Caco-2 (cell line): ENCODE measurements at regions of chr13 and their contacts with region 1.

Region 1: DNA sequence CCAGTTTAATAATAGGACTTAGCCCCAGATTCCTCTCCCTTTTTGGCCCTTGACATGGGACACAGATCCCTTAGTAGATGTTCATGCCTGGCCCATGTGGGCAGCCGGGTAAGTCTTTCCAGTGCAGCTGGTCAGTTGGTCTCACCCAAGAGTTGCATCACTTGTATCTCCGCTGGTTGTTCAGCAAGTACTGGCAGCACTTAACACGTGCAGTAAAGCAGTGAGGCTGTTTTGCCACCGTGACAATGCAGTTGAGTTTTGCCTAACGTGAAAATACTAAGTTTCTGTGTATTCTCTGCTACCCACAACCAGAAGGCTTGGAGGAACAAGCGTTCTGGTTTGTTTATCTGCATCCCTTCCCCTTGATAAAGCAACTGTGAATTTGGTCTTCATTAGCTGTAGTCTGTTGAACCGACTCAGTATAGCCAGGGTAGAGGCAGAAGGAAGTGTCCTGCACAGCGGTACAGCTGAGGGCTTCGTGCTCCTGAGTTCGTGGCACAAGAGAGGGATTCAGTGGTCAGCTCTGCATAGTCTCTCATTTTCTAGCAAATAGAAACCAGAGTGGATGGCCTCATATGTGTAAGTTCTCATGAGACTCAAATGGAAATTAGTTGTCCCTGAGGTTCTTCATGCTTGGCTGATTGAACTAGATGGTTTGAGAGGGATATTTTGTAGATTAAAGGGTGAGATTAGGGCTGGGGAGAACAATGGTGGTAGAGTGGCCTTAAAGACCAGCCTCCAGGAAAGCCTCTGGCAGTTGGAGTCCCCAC is 50.3 kb downstream of the ARHGEF7 start:
- DNase-seq: no peak
- H3K4me3 ChIP-seq: no peak overlapping the region
- H3K4me3 Mint-ChIP-seq: no peak overlapping the region
- H3K27ac Mint-ChIP-seq: no peak overlapping the region
- H3K4me1 ChIP-seq: no peaks in the 10 kb centered on the region
- H3K4me1 Mint-ChIP-seq: peaks cover 13% of the 10 kb centered on the region
- H3K27me3 ChIP-seq: no peaks in the 10 kb centered on the region
- H3K27me3 Mint-ChIP-seq: no peaks in the 10 kb centered on the region
- CTCF ChIP-seq: no peak

Region 2: GRCh38 chr13:111129465-111130115 is 35.8 kb before region 1 on chr13:
- CTCF ChIA-PET with region 1: no interaction called
- POLR2A ChIA-PET with region 1: no interaction called
- intact Hi-C with region 1: loop called (anchors 1 kb)
- DNase-seq: no peak
- H3K4me3 ChIP-seq: no peak overlapping the region
- H3K4me3 Mint-ChIP-seq: no peak overlapping the region
- H3K27ac Mint-ChIP-seq: no peak overlapping the region
- H3K4me1 ChIP-seq: peaks cover 4% of the 10 kb centered on the region; the same call in 1 of the 2 replicates
- H3K4me1 Mint-ChIP-seq: no peaks in the 10 kb centered on the region
- H3K27me3 ChIP-seq: no peaks in the 10 kb centered on the region
- H3K27me3 Mint-ChIP-seq: peaks cover 19% of the 10 kb centered on the region
- CTCF ChIP-seq: no peak

Region 3: GRCh38 chr13:111216166-111216960 is 50.9 kb after region 1 on chr13:
- CTCF ChIA-PET with region 1: no interaction called
- POLR2A ChIA-PET with region 1: no interaction called
- intact Hi-C with region 1: no loop called
- DNase-seq: peak; percentile 50 to 63
- H3K4me3 ChIP-seq: no peak overlapping the region
- H3K4me3 Mint-ChIP-seq: no peak overlapping the region
- H3K27ac Mint-ChIP-seq: no peak overlapping the region
- H3K4me1 ChIP-seq: peaks cover 2% of the 10 kb centered on the region; the same call in 1 of the 2 replicates
- H3K4me1 Mint-ChIP-seq: peaks cover 8% of the 10 kb centered on the region
- H3K27me3 ChIP-seq: no peaks in the 10 kb centered on the region
- H3K27me3 Mint-ChIP-seq: no peaks in the 10 kb centered on the region
- CTCF ChIP-seq: peak; percentile 37 to 67